ENCODE measurements at regions of chr5 and their contacts with region 1.

Region 1: GRCh38 chr5:172479044-172479783 is 24.9 kb upstream of the SH3PXD2B start:
- DNase-seq: peak; percentile 89
- H3K4me3 Mint-ChIP-seq: no peak overlapping the region
- H3K27ac Mint-ChIP-seq: no peak overlapping the region
- H3K4me1 Mint-ChIP-seq: no peaks in the 10 kb centered on the region
- H3K27me3 Mint-ChIP-seq: peaks cover 43% of the 10 kb centered on the region
- CTCF ChIP-seq: peak; percentile 86

Region 2: GRCh38 chr5:172361566-172362238 is 117.5 kb before region 1 on chr5:
- CTCF ChIA-PET with region 1: no interaction called
- intact Hi-C with region 1: no loop called
- DNase-seq: peak; percentile 84
- H3K4me3 Mint-ChIP-seq: peak overlapping the region; percentile 2
- H3K27ac Mint-ChIP-seq: peak overlapping the region; percentile 94
- H3K4me1 Mint-ChIP-seq: peaks cover 52% of the 10 kb centered on the region
- H3K27me3 Mint-ChIP-seq: no peaks in the 10 kb centered on the region
- CTCF ChIP-seq: no peak

Region 3: GRCh38 chr5:172458976-172459782 is 20.0 kb before region 1 on chr5:
- CTCF ChIA-PET with region 1: interaction called, 10 read pairs
- intact Hi-C with region 1: no loop called
- DNase-seq: no peak
- H3K4me3 Mint-ChIP-seq: no peak overlapping the region
- H3K27ac Mint-ChIP-seq: no peak overlapping the region
- H3K4me1 Mint-ChIP-seq: no peaks in the 10 kb centered on the region
- H3K27me3 Mint-ChIP-seq: peaks cover 17% of the 10 kb centered on the region
- CTCF ChIP-seq: no peak

Region 4: GRCh38 chr5:172697123-172698121 is 218.2 kb after region 1 on chr5:
- CTCF ChIA-PET with region 1: interaction called, 7 read pairs
- intact Hi-C with region 1: loop called (anchors 1 kb)
- DNase-seq: peak; percentile 92
- H3K4me3 Mint-ChIP-seq: peak overlapping the region; percentile 77
- H3K27ac Mint-ChIP-seq: peak overlapping the region; percentile 55
- H3K4me1 Mint-ChIP-seq: peaks cover 10% of the 10 kb centered on the region
- H3K27me3 Mint-ChIP-seq: peaks cover 36% of the 10 kb centered on the region
- CTCF ChIP-seq: peak; percentile 86

Region 5: GRCh38 chr5:172958331-172959046 is 479.3 kb after region 1 on chr5:
- CTCF ChIA-PET with region 1: no interaction called
- intact Hi-C with region 1: loop called (anchors 10 kb)
- DNase-seq: peak; percentile 71
- H3K4me3 Mint-ChIP-seq: peak overlapping the region; percentile 100
- H3K27ac Mint-ChIP-seq: peak overlapping the region; percentile 99
- H3K4me1 Mint-ChIP-seq: peaks cover 32% of the 10 kb centered on the region
- H3K27me3 Mint-ChIP-seq: no peaks in the 10 kb centered on the region
- CTCF ChIP-seq: no peak

Measured in Calu3 (cell line).